ENCODE measurements at regions of chrX and their contacts with region 1.

Region 1: DNA sequence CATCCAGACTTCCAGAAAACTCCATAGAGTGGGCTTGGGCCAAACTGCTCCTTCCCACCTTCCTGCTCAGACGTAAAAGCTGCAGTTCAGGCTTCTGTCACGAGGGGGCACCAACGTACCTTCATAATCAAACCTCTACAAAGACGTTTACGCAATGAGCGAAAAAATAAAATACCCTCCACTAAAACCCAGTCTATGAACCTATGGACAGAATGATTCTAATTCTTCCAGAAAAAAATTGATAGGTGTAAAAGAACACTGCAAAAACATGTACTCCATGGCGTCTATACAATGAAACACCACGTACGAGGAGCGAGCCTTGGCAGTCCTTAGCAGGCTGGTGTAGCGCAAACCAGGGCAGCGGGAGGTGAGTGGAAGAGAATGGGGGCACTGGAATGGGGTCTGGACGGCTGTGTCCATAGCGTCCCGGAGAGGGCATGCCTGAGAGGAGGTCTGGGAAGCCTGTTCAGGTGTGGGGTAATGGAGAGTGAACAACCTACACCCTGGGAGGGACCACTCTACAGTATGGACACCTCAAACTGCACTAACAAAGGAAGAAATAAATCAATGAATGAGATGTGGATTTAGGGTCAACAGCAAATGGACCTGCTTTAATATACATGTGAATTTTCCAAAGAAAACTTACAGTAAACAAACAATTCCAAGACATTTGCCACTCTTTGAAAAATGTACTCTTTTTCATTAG is 14.4 kb upstream of the RAB40A start:
- DNase-seq: peak; percentile 74
- H3K4me3 Mint-ChIP-seq: peak overlapping the region; percentile 24
- H3K27ac Mint-ChIP-seq: peak overlapping the region; percentile 57
- H3K4me1 Mint-ChIP-seq: peaks cover 14% of the 10 kb centered on the region
- H3K27me3 Mint-ChIP-seq: peaks cover 64% of the 10 kb centered on the region
- CTCF ChIP-seq: peak; percentile 85

Region 2: GRCh38 chrX:103629318-103630170 is 95.9 kb after region 1 on chrX:
- CTCF ChIA-PET with region 1: no interaction called
- POLR2A ChIA-PET with region 1: interaction called, 4 read pairs
- intact Hi-C with region 1: loop called (anchors 2 kb)
- DNase-seq: peak; percentile 49
- H3K4me3 Mint-ChIP-seq: peak overlapping the region; percentile 84
- H3K27ac Mint-ChIP-seq: peak overlapping the region; percentile 84
- H3K4me1 Mint-ChIP-seq: peaks cover 13% of the 10 kb centered on the region
- H3K27me3 Mint-ChIP-seq: peaks cover 42% of the 10 kb centered on the region
- CTCF ChIP-seq: peak; percentile 28

Region 3: GRCh38 chrX:103774070-103774642 is 240.5 kb after region 1 on chrX:
- CTCF ChIA-PET with region 1: interaction called, 3 read pairs
- POLR2A ChIA-PET with region 1: no interaction called
- intact Hi-C with region 1: loop called (anchors 1 kb)
- DNase-seq: peak; percentile 64
- H3K4me3 Mint-ChIP-seq: no peak overlapping the region
- H3K27ac Mint-ChIP-seq: no peak overlapping the region
- H3K4me1 Mint-ChIP-seq: no peaks in the 10 kb centered on the region
- H3K27me3 Mint-ChIP-seq: peaks cover 62% of the 10 kb centered on the region
- CTCF ChIP-seq: peak; percentile 36

Region 4: DNA sequence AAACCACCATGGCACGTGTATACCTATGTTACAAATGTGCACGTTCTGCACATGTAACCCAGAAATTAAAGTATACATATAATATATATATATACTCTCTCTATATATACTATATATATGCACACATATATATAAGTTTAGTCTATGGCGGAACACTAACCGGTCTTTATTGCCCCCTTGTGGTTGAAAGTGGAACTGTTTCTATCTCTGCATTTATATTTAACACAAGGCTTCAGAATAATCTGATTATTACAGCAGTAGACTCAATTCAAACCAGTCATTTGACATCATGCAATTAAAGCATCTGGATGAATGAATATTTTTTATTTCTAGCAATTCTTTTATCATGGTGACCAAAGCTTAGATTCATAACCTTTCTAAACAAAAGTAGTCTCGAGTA is 283.8 kb after region 1 on chrX:
- CTCF ChIA-PET with region 1: interaction called, 3 read pairs
- POLR2A ChIA-PET with region 1: no interaction called
- intact Hi-C with region 1: loop called (anchors 1 kb)
- DNase-seq: peak; percentile 66
- H3K4me3 Mint-ChIP-seq: no peak overlapping the region
- H3K27ac Mint-ChIP-seq: no peak overlapping the region
- H3K4me1 Mint-ChIP-seq: no peaks in the 10 kb centered on the region
- H3K27me3 Mint-ChIP-seq: peaks cover 36% of the 10 kb centered on the region
- CTCF ChIP-seq: peak; percentile 68

Measured in MCF 10A (cell line).